HepG2 (cell line): ENCODE measurements at regions of chr18 and their contacts with region 1.

Region 1: DNA sequence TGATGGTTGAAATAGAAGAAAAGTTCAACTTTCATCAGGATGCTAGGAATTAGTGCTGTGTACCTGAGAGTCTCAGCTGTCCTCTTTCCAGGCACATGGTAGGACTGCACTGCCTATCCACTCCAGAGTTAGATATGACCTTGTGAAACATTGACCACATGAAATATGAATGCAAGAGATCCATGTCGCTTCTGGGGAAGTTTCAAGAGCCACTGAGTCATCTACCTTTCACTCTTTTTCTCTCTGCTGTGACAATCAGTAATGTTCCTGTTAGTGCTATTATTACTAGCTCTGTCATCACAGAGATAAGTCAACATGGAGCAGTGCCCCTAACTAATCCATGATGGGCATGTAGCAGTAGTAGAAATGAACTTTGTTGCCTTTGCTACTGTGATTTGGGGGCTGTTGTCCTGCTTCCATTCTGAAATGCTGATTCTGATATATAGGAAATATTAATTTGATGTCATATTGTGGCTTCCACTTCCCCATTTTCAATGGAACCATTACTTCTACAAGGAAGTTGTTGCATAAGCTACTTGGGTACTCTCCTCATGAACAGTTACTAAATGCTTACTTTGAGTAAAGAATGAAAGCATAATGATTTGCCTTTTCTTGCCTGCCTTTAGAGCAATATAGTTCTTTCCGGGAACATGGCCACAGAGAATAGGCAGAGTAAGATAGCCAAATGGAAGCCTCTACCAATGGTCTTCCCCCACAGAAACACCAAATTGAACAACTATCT is 192.8 kb upstream of the ZNF521 start:
- DNase-seq: no peak
- ATAC-seq: no peak
- H3K4me3 ChIP-seq: no peak overlapping the region
- H3K27ac ChIP-seq: no peak overlapping the region
- H3K4me1 ChIP-seq: no peaks in the 10 kb centered on the region
- H3K27me3 ChIP-seq: no peaks in the 10 kb centered on the region
- CTCF ChIP-seq: no peak
- EP300 ChIP-seq: no peak
- POLR2A ChIP-seq: no peak
- RAD21 ChIP-seq: no peak

Region 2: GRCh38 chr18:26356045-26356785 is 811.5 kb after region 1 on chr18:
- CTCF ChIA-PET with region 1: no interaction called
- POLR2A ChIA-PET with region 1: no interaction called
- in situ Hi-C with region 1: no loop called
- intact Hi-C with region 1: loop called (anchors 10 kb)
- DNase-seq: no peak
- ATAC-seq: no peak
- H3K4me3 ChIP-seq: no peak overlapping the region
- H3K27ac ChIP-seq: no peak overlapping the region
- H3K4me1 ChIP-seq: 0 out of 2 replicates have a peak, but pooled peaks cover 7% of the 10 kb centered on the region
- H3K27me3 ChIP-seq: no peaks in the 10 kb centered on the region; a peak in 1 of 5 replicates
- CTCF ChIP-seq: no peak
- EP300 ChIP-seq: no peak
- POLR2A ChIP-seq: no peak
- RAD21 ChIP-seq: no peak